Sciatic nerve (tissue), 2 donors: ENCODE measurements at regions of chr2 and their contacts with region 1.

Region 1: DNA sequence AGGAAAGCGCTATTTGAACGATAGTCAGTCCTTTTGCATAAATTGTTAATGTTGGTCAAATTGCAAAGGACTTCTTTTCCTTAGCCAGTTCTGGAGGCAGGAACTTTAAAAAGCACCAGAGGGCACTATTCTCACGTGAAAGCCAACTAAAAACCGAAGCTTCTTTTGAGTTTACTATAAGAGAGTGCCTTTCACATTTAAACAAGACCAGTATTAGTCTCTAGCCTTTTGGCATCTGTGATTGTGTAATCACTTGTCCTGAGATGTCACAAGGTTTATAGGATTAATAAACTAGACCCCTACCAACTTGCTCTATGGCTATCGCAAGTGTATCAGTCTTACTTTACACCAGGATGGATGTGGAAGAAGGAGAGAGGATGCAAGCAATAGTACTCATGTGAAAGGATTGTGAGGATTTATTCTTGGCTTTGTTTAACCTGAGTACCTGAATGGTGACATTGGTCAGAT is 14.4 kb upstream of the STAT4 start:
- DNase-seq: no peak
- ATAC-seq: peak; percentile 86

Region 2: GRCh38 chr2:191178806-191179514 is 13.8 kb after region 1 on chr2:
- intact Hi-C with region 1: no loop called
- DNase-seq: peak; percentile 76
- ATAC-seq: peak; percentile 96

Region 3: DNA sequence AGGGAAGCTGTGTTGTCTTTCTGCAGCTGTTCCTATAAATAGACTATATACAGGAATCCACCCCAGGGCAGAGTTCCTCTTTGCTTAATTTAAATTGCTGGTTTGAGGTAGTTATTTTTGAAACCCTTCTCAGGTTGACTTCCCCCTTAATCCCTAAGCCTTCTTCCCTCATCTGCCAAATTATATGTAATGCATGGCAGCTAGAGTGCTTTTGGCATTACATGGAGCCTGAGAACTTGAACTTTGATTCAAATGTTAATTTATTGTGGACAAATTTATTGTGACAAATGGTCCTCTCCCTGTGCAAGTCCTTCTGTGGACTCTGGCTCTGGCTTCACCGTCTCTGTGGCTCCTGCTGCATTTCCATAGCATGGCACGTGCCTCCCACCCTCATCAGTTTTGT is 109.2 kb after region 1 on chr2:
- intact Hi-C with region 1: no loop called
- DNase-seq: no peak
- ATAC-seq: no peak

Region 4: GRCh38 chr2:191521608-191522208 is 356.5 kb after region 1 on chr2:
- intact Hi-C with region 1: loop called (anchors 10 kb)
- DNase-seq: no peak
- ATAC-seq: no peak

Region 5: GRCh38 chr2:192459422-192459821 is 1294.2 kb after region 1 on chr2:
- intact Hi-C with region 1: no loop called
- DNase-seq: no peak
- ATAC-seq: no peak